BJ (cell line): ENCODE measurements at regions of chr6 and their contacts with region 1.

Region 1: DNA sequence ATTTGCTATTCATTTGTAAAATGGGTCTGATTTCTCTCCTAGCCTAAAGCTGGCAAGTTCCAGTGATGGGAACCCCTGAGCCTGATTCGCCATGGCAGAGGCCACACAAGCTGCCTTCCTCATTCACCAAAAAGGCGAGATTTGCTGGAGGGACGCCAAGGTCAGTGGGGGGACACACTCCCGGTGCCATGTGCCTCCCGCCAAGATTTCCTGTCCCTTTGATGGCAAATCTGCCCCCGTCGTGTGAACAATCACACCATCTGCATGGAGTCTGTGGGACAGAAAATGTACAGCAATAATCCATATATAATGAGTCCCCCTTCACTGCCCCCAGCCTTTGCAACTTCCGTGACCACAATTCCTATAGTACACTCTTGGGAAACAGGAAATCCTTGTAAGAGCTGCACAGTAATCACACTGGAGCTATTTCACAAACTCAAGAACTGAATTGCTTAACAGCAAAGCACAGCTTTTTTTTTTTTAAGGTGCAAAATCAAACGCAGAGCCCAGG is 15.7 kb upstream of the IGF2R start:
- DNase-seq: no peak
- H3K4me3 ChIP-seq: no peak overlapping the region
- H3K27me3 ChIP-seq: peaks cover 4% of the 10 kb centered on the region
- CTCF ChIP-seq: no peak

Region 2: DNA sequence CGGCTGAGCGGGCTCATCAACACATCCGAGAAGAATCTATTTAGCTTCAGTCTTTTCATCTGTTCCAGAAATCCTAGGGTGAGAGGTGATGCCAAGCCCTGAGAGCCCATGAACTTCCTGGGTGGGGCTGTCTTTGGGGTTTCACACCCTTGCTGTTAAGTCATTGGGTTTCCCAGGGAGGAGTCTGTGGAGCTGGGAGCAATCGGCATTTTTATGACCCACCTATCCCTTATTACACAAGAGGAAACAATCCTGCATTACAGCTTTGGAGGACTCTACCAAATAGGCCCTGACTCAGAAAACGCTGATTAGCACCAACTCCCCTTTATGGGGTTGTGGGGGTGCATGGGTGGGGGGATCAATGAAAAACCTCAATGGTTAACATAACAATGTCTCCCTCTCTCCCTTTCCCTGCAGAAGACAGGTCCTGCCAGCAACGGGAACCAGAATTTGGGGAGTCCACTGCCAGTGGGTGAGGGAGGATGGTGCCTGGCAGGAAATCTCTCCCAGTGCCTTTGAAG is 1180.2 kb before region 1 on chr6:
- CTCF ChIA-PET with region 1: no interaction called
- POLR2A ChIA-PET with region 1: interaction called, 13 read pairs
- DNase-seq: peak; percentile 29
- H3K4me3 ChIP-seq: no peak overlapping the region
- H3K27me3 ChIP-seq: no peaks in the 10 kb centered on the region
- CTCF ChIP-seq: no peak

Region 3: DNA sequence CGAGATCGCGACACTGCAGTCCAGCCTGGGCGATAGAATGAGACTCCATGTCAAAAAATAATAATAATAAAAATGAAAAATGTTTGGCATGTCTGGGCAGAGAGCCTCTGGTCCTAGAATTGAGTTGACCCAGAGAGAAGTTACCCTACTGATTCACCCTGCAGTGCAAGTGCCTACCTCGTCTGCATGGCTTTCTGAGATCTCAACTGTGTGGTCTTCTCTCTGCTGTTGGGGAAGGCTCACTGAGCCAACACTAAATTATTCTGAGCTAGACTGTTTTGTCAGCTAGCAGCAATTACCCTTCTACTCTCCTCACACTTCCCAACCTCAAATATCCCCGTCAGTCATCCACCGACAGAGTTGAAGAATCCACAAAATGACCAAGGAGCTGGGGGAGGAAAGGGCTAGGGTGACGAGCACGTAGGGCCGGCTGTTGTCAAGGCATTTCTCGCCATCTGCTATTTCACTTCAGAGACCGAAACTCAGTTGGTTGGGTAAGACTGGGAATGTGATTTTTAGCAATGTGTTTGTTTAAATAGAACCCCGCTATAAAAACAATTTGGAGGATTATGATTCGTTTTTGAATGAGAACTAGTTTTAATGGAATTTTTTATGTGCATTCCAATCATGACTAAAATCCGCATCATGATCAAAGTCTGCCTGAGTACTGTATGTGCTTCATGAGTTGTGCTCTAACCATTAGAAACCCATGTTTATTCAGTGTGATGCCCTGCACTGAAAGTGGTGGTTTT is 53.0 kb before region 1 on chr6:
- CTCF ChIA-PET with region 1: no interaction called
- POLR2A ChIA-PET with region 1: no interaction called
- DNase-seq: peak; percentile 96
- H3K4me3 ChIP-seq: no peak overlapping the region
- H3K27me3 ChIP-seq: peaks cover 1% of the 10 kb centered on the region
- CTCF ChIP-seq: no peak

Region 4: DNA sequence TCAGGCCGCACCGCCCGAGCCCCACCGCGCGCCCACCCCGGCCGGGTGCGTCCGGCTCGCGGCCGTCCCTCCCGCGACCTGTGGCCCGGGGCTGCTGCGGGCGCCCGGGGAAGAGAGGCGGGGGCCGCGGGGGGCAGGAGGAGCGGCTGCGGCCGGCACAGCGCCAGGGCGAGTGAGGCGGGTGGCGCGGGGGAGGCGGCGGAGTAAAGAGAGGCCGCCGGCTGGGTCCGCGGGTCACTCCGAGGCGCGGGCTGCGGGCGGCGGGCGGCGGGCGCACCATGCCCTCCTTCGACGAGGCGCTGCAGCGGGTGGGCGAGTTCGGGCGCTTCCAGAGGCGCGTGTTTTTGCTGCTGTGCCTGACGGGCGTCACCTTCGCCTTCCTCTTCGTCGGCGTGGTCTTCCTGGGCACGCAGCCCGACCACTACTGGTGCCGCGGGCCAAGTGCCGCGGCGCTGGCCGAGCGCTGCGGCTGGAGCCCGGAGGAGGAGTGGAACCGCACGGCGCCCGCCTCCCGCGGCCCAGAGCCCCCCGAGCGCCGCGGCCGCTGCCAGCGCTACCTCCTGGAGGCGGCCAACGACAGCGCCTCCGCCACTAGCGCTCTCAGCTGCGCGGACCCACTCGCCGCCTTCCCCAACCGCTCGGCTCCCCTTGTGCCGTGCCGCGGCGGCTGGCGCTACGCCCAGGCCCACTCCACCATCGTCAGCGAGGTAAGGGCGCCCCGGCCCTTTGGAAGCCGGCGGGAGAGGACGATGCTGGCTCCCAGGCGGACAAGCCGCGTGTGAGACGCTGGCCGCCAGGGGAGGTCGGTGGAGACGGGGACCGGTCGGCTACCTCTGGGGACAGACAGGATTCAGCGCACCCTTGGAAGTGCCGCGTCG is 395.2 kb after region 1 on chr6 and contains the start of gene SLC22A3:
- CTCF ChIA-PET with region 1: no interaction called
- POLR2A ChIA-PET with region 1: no interaction called
- DNase-seq: no peak
- H3K4me3 ChIP-seq: peak within 1 kb of the TSS; percentile 19
- H3K27me3 ChIP-seq: peaks cover 4% of the 10 kb centered on the region
- CTCF ChIP-seq: no peak
- polyA plus RNA-seq, gene SLC22A3: not detected in 2 replicates